AG04449 (cell line): ENCODE measurements at regions of chr20 and their contacts with region 1.

Region 1: GRCh38 chr20:49785852-49786175 is 26.8 kb upstream of the SLC9A8 start:
- DNase-seq: no peak
- H3K4me3 ChIP-seq: no peak overlapping the region
- CTCF ChIP-seq: no peak

Region 2: GRCh38 chr20:49775229-49775693 is 10.6 kb before region 1 on chr20:
- CTCF ChIA-PET with region 1: interaction called, 14 read pairs
- POLR2A ChIA-PET with region 1: no interaction called
- DNase-seq: no peak
- H3K4me3 ChIP-seq: no peak overlapping the region
- CTCF ChIP-seq: no peak